ENCODE measurements at regions of chr4 and their contacts with region 1.

Region 1: DNA sequence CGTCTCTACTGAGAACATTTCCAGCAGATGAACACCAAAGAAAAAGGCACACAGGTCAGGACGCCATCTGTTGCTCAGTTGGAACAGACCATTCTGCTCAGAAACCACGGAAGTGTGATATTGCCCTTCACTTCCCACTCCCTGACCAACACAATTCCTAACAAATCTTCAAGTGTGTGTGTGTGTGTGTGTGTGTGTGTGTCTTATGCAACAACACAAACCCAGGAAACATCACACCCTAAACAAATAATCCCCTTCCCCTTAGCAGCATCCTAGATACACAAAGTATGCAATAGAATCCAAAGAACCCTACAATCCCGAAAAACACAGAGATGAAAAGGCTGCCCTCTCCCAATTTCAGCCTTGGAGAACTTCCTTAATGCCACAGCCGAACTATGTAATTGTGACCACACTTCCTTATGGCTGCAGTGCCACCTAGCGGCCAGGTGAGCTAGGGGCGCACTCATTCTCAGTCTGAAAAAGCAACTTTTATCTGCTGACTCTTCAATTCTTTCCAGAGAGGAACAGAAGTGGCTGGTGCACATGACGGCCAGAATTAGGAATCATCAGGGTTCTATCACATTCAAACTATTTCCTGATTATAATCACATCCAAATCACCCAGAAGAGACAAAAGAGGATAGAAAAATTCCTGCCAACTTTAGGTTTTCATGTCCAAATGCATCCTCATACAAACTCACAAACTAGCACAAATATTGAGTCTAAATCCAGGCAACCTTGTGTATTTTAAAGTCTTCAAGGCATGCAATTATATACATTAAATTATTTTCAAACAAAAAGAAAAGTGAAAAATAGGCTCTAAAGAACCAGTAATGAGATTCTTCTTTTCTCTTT is 164.9 kb downstream of the DHX15 start:
- DNase-seq: peak; percentile 40 to 72
- ATAC-seq: peak; percentile 71 to 77
- H3K4me3 ChIP-seq: no peak overlapping the region
- H3K27ac ChIP-seq: peak overlapping the region in 1 of 4 donors; percentile 4
- H3K4me1 ChIP-seq: peaks cover 10 to 13% of the 10 kb centered on the region in 2 donors
- H3K27me3 ChIP-seq: no peaks in the 10 kb centered on the region
- CTCF ChIP-seq: peak; percentile 77 to 94 (median 89)
- POLR2A ChIP-seq: no peak

Region 2: DNA sequence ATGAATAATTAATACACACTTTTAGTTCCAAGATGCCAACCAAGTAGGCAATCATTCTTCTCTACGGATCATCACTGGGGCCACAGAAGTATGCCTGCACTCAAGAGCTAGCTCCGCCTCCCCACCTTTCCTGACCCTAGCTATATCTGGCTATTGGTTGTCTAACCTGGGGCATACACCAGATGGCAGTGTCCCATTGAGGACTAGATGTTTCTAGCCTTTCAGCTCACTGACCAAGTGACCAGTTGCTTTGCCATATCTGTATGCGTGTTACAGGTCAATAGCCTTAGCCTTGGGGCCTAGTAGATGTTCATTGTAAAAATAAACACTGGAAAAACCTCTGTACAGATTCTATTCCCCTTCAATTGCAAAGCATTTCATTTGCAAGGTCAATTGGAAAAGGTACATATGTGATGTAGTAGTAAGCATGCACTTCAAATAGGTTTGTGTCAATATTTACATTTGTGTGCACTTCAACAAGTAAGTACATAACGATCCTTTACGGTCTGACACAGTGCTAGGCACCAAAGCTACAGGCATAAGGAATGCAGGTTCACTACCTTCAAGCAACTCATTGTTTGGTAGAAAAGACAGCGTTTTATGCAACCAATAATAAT is 1051.2 kb before region 1 on chr4:
- in situ Hi-C with region 1: loop called in 2 of 4 experiments (anchors 25 kb)
- intact Hi-C with region 1: loop called (anchors 1 kb)
- DNase-seq: peak; percentile 59 to 78
- ATAC-seq: peak; percentile 77 to 83
- H3K4me3 ChIP-seq: no peak overlapping the region
- H3K27ac ChIP-seq: peak overlapping the region; percentile 73 to 85 (median 80)
- H3K4me1 ChIP-seq: peaks cover 24 to 30% of the 10 kb centered on the region in 2 donors
- H3K27me3 ChIP-seq: no peaks in the 10 kb centered on the region
- CTCF ChIP-seq: peak; percentile 72 to 77 (median 74)
- POLR2A ChIP-seq: no peak

Region 3: GRCh38 chr4:23945451-23946017 is 473.9 kb before region 1 on chr4:
- in situ Hi-C with region 1: loop called in 1 of 4 experiments (anchors 25 kb)
- intact Hi-C with region 1: loop called (anchors 5 kb)
- DNase-seq: peak; percentile 65 to 81
- ATAC-seq: peak; percentile 90 to 93
- H3K4me3 ChIP-seq: no peak overlapping the region
- H3K27ac ChIP-seq: peak overlapping the region; percentile 71 to 85 (median 78)
- H3K4me1 ChIP-seq: peaks cover 13 to 45% of the 10 kb centered on the region in 2 donors
- H3K27me3 ChIP-seq: no peaks in the 10 kb centered on the region
- CTCF ChIP-seq: no peak
- POLR2A ChIP-seq: peak; percentile 36 to 45

Region 4: DNA sequence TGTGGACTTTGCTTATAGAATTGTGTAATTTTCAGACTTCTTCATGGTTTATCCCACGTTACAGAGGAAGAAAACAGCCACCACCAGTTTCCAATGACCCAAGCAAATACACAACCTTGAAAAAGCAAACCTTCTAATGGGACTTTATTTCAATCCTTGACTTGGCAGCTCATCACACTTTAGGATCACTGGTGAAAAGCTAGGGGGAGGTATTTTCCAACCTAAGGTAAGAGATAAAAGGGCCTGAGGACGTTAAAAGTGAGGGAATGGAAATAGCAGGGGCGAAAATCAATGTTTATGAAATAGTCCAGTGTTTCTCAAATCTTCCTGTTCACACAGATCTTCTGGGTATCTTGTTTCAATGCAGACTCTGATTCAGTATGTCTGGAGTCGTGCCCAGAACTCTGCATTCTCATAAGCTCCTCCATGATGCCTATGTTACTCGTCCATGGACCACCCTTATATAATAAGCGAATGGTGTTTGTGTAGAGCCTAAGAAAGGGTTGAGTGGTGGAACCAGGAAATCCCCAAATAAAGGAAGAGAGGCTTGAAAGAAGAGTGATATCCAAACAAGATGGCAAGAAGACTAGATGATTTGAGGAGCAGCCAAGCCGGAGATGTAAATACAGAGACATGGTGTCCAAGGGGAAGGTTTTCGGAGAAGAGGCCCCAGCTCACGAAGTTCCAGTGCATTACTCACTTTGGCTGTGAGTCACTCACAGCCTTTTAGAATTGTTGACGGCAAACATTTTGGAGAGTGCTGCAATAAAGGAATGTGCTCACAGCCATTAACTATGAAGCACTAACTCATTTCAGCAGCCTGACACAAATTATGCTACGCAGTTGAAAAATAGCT is 314.0 kb before region 1 on chr4:
- in situ Hi-C with region 1: no loop called
- intact Hi-C with region 1: loop called (anchors 10 kb)
- DNase-seq: peak; percentile 20 to 25
- ATAC-seq: peak; percentile 74 to 94
- H3K4me3 ChIP-seq: no peak overlapping the region
- H3K27ac ChIP-seq: peak overlapping the region; percentile 3 to 47 (median 14)
- H3K4me1 ChIP-seq: peaks cover 22 to 27% of the 10 kb centered on the region in 2 donors
- H3K27me3 ChIP-seq: no peaks in the 10 kb centered on the region
- CTCF ChIP-seq: no peak
- POLR2A ChIP-seq: no peak

Region 5: DNA sequence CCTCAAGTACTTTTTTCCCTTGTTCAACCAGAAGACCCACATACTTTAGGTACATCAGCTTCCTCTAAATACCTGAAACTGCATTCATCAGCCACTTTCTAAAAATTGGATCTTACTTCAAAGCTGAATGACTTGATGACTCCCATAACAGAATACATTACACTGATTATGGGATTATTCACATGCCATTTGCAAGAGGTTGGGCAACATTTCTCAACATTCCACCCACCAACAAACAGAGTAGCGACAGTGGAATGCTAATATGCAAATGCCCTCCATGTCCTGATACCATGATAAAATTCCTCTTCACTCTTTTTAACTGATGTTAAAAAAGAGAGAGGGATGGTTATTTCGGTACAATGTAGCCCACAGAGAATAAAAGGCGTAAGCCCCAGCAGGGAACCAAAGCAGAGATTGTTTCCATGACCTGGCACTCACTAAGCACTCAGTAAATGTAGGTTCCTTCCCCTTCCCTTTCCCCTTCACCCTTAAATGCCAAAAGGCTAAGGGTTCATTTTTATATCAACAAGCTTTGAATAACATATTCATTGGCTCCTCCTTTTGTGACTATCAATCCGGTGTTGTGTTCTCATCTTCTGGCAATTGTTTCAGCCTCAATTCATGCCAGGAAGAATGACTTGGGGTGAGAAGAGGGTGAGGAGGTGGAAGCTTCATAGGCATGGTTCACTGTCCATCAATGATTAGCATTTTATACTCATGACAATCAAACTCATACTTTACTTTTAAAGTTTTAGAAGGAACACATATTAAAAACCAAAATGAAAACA is 152.3 kb before region 1 on chr4:
- in situ Hi-C with region 1: no loop called
- intact Hi-C with region 1: loop called (anchors 5 kb)
- DNase-seq: no peak
- ATAC-seq: no peak
- H3K4me3 ChIP-seq: no peak overlapping the region
- H3K27ac ChIP-seq: peak overlapping the region in 2 of 4 donors; percentile 79 to 83
- H3K4me1 ChIP-seq: peaks cover 18 to 36% of the 10 kb centered on the region in 2 donors
- H3K27me3 ChIP-seq: no peaks in the 10 kb centered on the region
- CTCF ChIP-seq: no peak
- POLR2A ChIP-seq: no peak

Measured in gastrocnemius medialis (tissue), 4 donors.